ENCODE measurements at regions of chr4 and their contacts with region 1.

Region 1: DNA sequence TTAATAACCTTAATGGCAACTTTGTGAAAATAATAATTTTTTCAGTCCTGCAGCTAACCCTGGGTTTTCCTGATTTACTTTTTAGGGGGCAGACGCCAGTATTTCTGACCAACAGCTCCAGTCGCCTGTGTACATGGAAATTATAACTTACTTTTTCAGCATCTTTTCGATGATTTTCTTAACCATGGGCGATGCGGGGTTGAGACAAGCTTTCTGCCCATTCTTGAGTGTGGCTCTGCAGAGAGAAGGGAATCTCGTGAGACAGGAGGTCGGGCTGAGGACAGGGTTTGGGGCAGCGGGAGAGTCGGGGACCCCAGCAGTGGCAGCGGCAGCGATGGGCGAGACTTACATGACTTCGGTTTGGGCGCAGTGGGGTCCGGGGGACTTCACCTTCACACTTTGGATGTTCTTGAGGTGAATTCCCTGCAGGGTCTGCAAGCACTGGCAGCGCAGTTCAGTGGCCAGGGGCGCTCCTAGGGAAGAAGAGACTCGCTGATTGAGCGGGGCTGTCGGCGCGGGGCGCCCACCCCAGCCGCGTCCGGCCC is 473 bp downstream of the CXCL2 start:
- DNase-seq: no peak
- H3K4me3 Mint-ChIP-seq: peak overlapping the region; percentile 79
- H3K27ac Mint-ChIP-seq: peak overlapping the region; percentile 98
- H3K4me1 Mint-ChIP-seq: peaks cover 38% of the 10 kb centered on the region
- H3K27me3 Mint-ChIP-seq: no peaks in the 10 kb centered on the region
- CTCF ChIP-seq: no peak

Region 2: GRCh38 chr4:73998040-73999011 is 100.2 kb before region 1 on chr4 and contains the start of gene CXCL5:
- CTCF ChIA-PET with region 1: interaction called, 7 read pairs
- intact Hi-C with region 1: loop called (anchors 1 kb)
- DNase-seq: peak; percentile 91
- H3K4me3 Mint-ChIP-seq: peak within 1 kb of the TSS; percentile 91
- H3K27ac Mint-ChIP-seq: peak within 1 kb of the TSS; percentile 96
- H3K4me1 Mint-ChIP-seq: peaks cover 31% of the 10 kb centered on the region
- H3K27me3 Mint-ChIP-seq: no peaks in the 10 kb centered on the region
- CTCF ChIP-seq: no peak
- total RNA-seq, gene CXCL5: 1,110 and 1,906 TPM in 2 replicates

Region 3: GRCh38 chr4:74038161-74039064 is 60.1 kb before region 1 on chr4 and contains the start of gene CXCL3:
- CTCF ChIA-PET with region 1: interaction called, 6 read pairs
- intact Hi-C with region 1: loop called (anchors 2 kb)
- DNase-seq: peak; percentile 94
- H3K4me3 Mint-ChIP-seq: peak within 1 kb of the TSS; percentile 84
- H3K27ac Mint-ChIP-seq: peak within 1 kb of the TSS; percentile 91
- H3K4me1 Mint-ChIP-seq: peaks cover 42% of the 10 kb centered on the region
- H3K27me3 Mint-ChIP-seq: no peaks in the 10 kb centered on the region
- CTCF ChIP-seq: no peak
- total RNA-seq, gene CXCL3: 80.8 and 153 TPM in 2 replicates

Region 4: GRCh38 chr4:74109116-74109869 is 10.8 kb after region 1 on chr4:
- CTCF ChIA-PET with region 1: interaction called, 10 read pairs
- intact Hi-C with region 1: no loop called
- DNase-seq: peak; percentile 71
- H3K4me3 Mint-ChIP-seq: peak overlapping the region; percentile 52
- H3K27ac Mint-ChIP-seq: peak overlapping the region; percentile 99
- H3K4me1 Mint-ChIP-seq: peaks cover 42% of the 10 kb centered on the region
- H3K27me3 Mint-ChIP-seq: no peaks in the 10 kb centered on the region
- CTCF ChIP-seq: no peak

Region 5: GRCh38 chr4:74117024-74117534 is 18.6 kb after region 1 on chr4:
- CTCF ChIA-PET with region 1: interaction called, 9 read pairs
- intact Hi-C with region 1: loop called (anchors 1 kb)
- DNase-seq: peak; percentile 67
- H3K4me3 Mint-ChIP-seq: peak overlapping the region; percentile 26
- H3K27ac Mint-ChIP-seq: peak overlapping the region; percentile 97
- H3K4me1 Mint-ChIP-seq: peaks cover 34% of the 10 kb centered on the region
- H3K27me3 Mint-ChIP-seq: no peaks in the 10 kb centered on the region
- CTCF ChIP-seq: no peak

Region 6: DNA sequence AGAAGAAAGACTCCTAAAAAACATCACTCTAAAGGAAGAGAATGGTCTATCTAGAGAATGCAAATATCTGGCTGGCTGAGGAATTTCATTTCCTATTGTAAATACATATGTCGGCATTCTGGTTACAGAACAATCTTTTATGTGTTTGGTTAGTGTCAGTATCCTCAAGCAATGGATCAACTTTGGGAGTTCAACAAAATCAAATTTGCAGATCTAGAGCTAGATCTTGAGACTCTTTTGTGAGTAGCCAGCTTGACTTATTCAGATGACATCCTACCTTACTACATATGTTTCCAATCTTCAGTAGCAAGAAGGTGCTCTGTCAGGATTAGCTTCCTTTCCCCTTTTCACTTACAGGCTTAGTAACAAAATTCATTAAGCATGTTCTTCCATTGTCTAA is 550.7 kb after region 1 on chr4:
- CTCF ChIA-PET with region 1: no interaction called
- intact Hi-C with region 1: no loop called
- DNase-seq: no peak
- H3K4me3 Mint-ChIP-seq: no peak overlapping the region
- H3K27ac Mint-ChIP-seq: peak overlapping the region; percentile 90
- H3K4me1 Mint-ChIP-seq: peaks cover 21% of the 10 kb centered on the region
- H3K27me3 Mint-ChIP-seq: no peaks in the 10 kb centered on the region
- CTCF ChIP-seq: no peak

Measured in Calu3 (cell line).